ENCODE measurements at regions of chr4 and their contacts with region 1.

Region 1: DNA sequence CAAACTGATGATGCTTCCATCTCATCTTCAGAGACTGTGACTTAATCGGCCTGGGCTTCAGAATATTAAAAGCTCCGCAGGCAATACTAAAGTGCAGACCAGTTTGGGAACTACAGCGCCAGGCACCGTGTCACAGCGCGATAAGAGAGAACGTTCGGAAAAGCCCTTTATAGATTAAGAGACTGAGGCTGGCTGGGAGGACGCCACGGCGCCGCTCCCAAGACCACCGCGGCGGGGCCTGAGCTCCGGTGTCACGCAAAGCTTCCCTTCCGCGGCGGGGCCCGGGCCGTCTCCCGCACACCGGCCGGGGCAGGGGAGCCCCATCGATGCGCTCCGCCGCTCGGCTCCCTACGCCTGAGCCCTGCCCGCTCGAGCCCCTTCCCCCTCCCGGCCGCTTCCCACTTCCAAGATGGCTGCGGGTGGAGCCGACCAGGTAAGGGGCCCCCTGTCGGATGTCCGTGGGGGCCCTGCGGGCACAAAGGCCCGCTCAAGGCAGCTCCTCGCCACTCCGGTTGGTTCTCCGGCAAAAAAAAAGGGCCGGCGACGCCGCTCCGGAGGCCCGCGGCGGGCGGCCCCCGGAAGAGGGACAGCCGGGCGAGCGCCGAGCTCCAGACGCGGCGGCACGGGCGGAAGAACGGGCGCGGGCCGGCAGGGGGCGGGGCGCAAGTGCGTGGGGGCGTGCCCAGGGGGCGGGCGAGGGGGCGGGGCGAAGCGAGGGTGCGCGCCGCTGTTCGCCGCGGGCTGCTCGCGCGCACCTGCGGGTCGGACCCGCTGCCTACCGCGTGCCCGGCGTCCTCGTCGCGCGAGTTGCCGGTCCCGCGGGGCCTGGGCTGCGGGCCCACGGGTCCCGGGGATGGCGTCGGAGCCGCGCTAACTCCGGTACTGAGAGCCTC is at the start of gene TBC1D14:
- DNase-seq: peak; percentile 82
- H3K4me3 Mint-ChIP-seq: peak within 1 kb of the TSS; percentile 95
- H3K27ac Mint-ChIP-seq: peak within 1 kb of the TSS; percentile 94
- H3K4me1 Mint-ChIP-seq: peaks cover 66% of the 10 kb centered on the region
- H3K27me3 Mint-ChIP-seq: no peaks in the 10 kb centered on the region
- total RNA-seq, gene TBC1D14: 58.1 and 59.7 TPM in 2 replicates

Region 2: GRCh38 chr4:6716018-6716911 is 193.1 kb before region 1 on chr4 and contains the start of gene BLOC1S4:
- intact Hi-C with region 1: loop called (anchors 1 kb)
- DNase-seq: peak; percentile 87
- H3K4me3 Mint-ChIP-seq: peak within 1 kb of the TSS; percentile 93
- H3K27ac Mint-ChIP-seq: peak within 1 kb of the TSS; percentile 88
- H3K4me1 Mint-ChIP-seq: peaks cover 27% of the 10 kb centered on the region
- H3K27me3 Mint-ChIP-seq: peaks cover 8% of the 10 kb centered on the region
- total RNA-seq, gene BLOC1S4: 21.5 and 23.6 TPM in 2 replicates

Region 3: GRCh38 chr4:6892190-6892908 is 17.0 kb before region 1 on chr4:
- intact Hi-C with region 1: loop called (anchors 2 kb)
- DNase-seq: peak; percentile 34
- H3K4me3 Mint-ChIP-seq: peak overlapping the region; percentile 43
- H3K27ac Mint-ChIP-seq: peak overlapping the region; percentile 78
- H3K4me1 Mint-ChIP-seq: peaks cover 36% of the 10 kb centered on the region
- H3K27me3 Mint-ChIP-seq: no peaks in the 10 kb centered on the region

Region 4: DNA sequence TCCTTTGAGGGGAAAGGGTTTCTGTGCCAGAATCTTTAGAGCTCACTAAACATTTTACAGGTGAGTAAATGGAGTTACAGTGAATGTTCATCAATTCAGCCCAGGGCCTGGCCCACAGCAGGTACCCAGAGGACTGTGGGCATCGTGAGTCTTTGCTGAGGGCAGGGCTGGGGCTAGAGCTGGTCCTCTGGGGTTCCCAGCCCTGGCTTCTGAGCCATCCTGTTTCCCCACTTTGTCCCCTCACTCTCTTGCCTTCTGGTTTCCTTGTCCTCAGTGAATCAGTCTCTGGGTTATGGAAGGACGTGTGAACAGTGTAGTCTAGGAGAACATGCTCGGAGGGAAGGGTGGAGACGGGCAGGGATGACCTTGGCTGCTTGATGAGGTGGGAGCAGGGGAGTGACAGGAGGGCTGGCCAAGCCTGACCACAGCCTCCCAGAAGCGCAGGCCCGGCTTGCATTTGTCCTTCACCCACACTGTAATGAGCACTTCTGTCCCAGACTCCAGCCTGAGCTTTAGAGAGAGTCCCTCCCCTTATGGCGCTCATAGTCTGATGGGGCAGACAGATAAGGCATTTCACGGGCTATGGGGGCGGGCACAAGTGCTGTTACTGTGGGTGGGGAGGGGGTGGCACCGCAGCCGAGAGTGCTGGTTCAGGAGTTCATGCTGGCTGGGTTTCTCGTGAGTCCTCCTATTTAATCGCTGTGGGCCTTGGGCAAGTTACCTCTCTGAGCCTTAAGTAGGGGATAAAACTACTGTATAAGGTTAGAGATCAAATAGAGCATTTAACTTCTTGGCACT is 17.6 kb after region 1 on chr4:
- intact Hi-C with region 1: loop called (anchors 2 kb)
- DNase-seq: peak; percentile 43
- H3K4me3 Mint-ChIP-seq: peak overlapping the region; percentile 72
- H3K27ac Mint-ChIP-seq: peak overlapping the region; percentile 63
- H3K4me1 Mint-ChIP-seq: peaks cover 80% of the 10 kb centered on the region
- H3K27me3 Mint-ChIP-seq: no peaks in the 10 kb centered on the region

Region 5: GRCh38 chr4:7042697-7043464 is 133.6 kb after region 1 on chr4 and contains the start of gene TADA2B:
- intact Hi-C with region 1: loop called (anchors 1 kb)
- DNase-seq: peak; percentile 93
- H3K4me3 Mint-ChIP-seq: peak within 1 kb of the TSS; percentile 95
- H3K27ac Mint-ChIP-seq: peak within 1 kb of the TSS; percentile 86
- H3K4me1 Mint-ChIP-seq: peaks cover 48% of the 10 kb centered on the region
- H3K27me3 Mint-ChIP-seq: peaks cover 8% of the 10 kb centered on the region
- total RNA-seq, gene TADA2B: 15.2 and 16.8 TPM in 2 replicates

Measured in activated T-helper 1 cell treated with anti-CD3 and anti-CD28 coated beads, Interleukin-12 subunit alpha, Interleukin-12 subunit beta, Interleukin-2, Interleukin-4 antibody, amounts not matched to agents 30 ng/mL and 10 ng/mL and 1 ng/mL, durations not matched to agents 14 hours and 24 hours and 36 hours (primary cell).